ENCODE measurements at regions of chr1 and their contacts with region 1.

Region 1: GRCh38 chr1:93846211-93846991 is 32.6 kb downstream of the DNTTIP2 start:
- DNase-seq: peak; percentile 88
- ATAC-seq: peak; percentile 45
- H3K4me3 Mint-ChIP-seq: peak overlapping the region; percentile 80
- H3K27ac Mint-ChIP-seq: peak overlapping the region; percentile 92
- H3K4me1 Mint-ChIP-seq: peaks cover 18% of the 10 kb centered on the region
- H3K27me3 Mint-ChIP-seq: peaks cover 1% of the 10 kb centered on the region
- CTCF ChIP-seq: no peak

Region 2: DNA sequence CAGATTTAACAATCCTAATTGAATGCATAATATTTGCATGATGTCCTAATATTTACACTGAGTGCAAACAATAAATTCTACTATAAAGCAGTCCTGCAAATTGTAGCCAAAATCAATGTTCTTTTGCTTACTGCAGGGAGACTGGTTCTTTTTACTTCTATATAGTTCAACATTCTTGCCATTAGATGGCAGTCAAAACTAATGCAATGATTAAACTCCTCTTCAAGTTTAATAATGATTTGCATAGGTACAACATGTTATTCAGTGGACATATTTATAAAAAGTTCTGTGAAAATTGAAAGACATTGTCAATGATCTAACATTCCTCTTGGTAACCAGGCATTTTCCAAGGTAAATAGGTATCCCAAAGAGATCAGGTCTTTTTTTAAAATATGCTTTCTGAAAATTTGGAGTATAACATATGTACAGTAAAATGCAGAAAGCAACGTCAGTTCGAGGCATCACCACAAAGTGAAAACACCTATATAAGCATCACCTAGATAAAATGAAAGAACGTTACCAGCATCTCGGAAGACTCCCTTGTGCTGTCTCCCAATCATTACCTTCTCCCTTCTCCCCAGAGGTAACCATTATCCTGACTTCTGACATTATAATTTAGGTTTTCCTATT is 408.3 kb before region 1 on chr1:
- CTCF ChIA-PET with region 1: interaction called, 9 read pairs
- POLR2A ChIA-PET with region 1: no interaction called
- intact Hi-C with region 1: loop called (anchors 5 kb)
- DNase-seq: no peak
- ATAC-seq: peak; percentile 27
- H3K4me3 Mint-ChIP-seq: no peak overlapping the region
- H3K27ac Mint-ChIP-seq: no peak overlapping the region
- H3K4me1 Mint-ChIP-seq: no peaks in the 10 kb centered on the region
- H3K27me3 Mint-ChIP-seq: peaks cover 6% of the 10 kb centered on the region
- CTCF ChIP-seq: peak; percentile 66

Region 3: GRCh38 chr1:93616996-93617669 is 229.3 kb before region 1 on chr1:
- CTCF ChIA-PET with region 1: interaction called, 10 read pairs
- POLR2A ChIA-PET with region 1: no interaction called
- intact Hi-C with region 1: no loop called
- DNase-seq: no peak
- ATAC-seq: no peak
- H3K4me3 Mint-ChIP-seq: no peak overlapping the region
- H3K27ac Mint-ChIP-seq: no peak overlapping the region
- H3K4me1 Mint-ChIP-seq: peaks cover 20% of the 10 kb centered on the region
- H3K27me3 Mint-ChIP-seq: no peaks in the 10 kb centered on the region
- CTCF ChIP-seq: no peak

Region 4: GRCh38 chr1:93878889-93879586 is 32.6 kb after region 1 on chr1 and contains the start of gene DNTTIP2:
- CTCF ChIA-PET with region 1: interaction called, 3 read pairs
- POLR2A ChIA-PET with region 1: interaction called, 15 read pairs
- intact Hi-C with region 1: no loop called
- DNase-seq: peak; percentile 94
- ATAC-seq: peak; percentile 91
- H3K4me3 Mint-ChIP-seq: peak within 1 kb of the TSS; percentile 93
- H3K27ac Mint-ChIP-seq: peak within 1 kb of the TSS; percentile 95
- H3K4me1 Mint-ChIP-seq: peaks cover 37% of the 10 kb centered on the region
- H3K27me3 Mint-ChIP-seq: no peaks in the 10 kb centered on the region
- CTCF ChIP-seq: no peak
- total RNA-seq, gene DNTTIP2: 81.7 to 82.2 TPM

Region 5: GRCh38 chr1:93909146-93910050 is 63.0 kb after region 1 on chr1 and contains the start of gene GCLM:
- CTCF ChIA-PET with region 1: interaction called, 9 read pairs
- POLR2A ChIA-PET with region 1: interaction called, 3 read pairs
- intact Hi-C with region 1: loop called (anchors 5 kb)
- DNase-seq: peak; percentile 96
- ATAC-seq: peak; percentile 89
- H3K4me3 Mint-ChIP-seq: peak within 1 kb of the TSS; percentile 96
- H3K27ac Mint-ChIP-seq: peak within 1 kb of the TSS; percentile 95
- H3K4me1 Mint-ChIP-seq: peaks cover 29% of the 10 kb centered on the region
- H3K27me3 Mint-ChIP-seq: peaks cover 1% of the 10 kb centered on the region
- CTCF ChIP-seq: peak; percentile 85
- total RNA-seq, gene GCLM: 25.3 to 26.4 TPM